GM12878 (cell line): ENCODE measurements at regions of chr7 and their contacts with region 1.

Region 1: GRCh38 chr7:137613006-137613405 is 233.8 kb downstream of the DGKI start:
- DNase-seq: no peak
- ATAC-seq: no peak
- H3K4me3 ChIP-seq: no peak overlapping the region
- H3K27ac ChIP-seq: no peak overlapping the region
- H3K4me1 ChIP-seq: no peaks in the 10 kb centered on the region
- H3K27me3 ChIP-seq: peaks cover 0 to 3% of the 10 kb centered on the region in 2 experiments; a peak in 2 of 4 replicates
- CTCF ChIP-seq: no peak
- EP300 ChIP-seq: no peak
- POLR2A ChIP-seq: no peak
- RAD21 ChIP-seq: no peak

Region 2: GRCh38 chr7:137626469-137627067 is 13.6 kb after region 1 on chr7:
- CTCF ChIA-PET with region 1: interaction called, 48 read pairs
- POLR2A ChIA-PET with region 1: no interaction called
- RAD21 ChIA-PET with region 1: interaction called, 3 read pairs
- SMC1A ChIA-PET with region 1: interaction called, 7 read pairs
- in situ Hi-C with region 1: no loop called
- intact Hi-C with region 1: no loop called
- DNase-seq: peak; percentile 12
- ATAC-seq: peak; percentile 92
- H3K4me3 ChIP-seq: no peak overlapping the region
- H3K27ac ChIP-seq: no peak overlapping the region
- H3K4me1 ChIP-seq: no peaks in the 10 kb centered on the region
- H3K27me3 ChIP-seq: no peaks in the 10 kb centered on the region
- CTCF ChIP-seq: peak; percentile 65 to 77 (median 76)
- EP300 ChIP-seq: no peak
- POLR2A ChIP-seq: no peak
- RAD21 ChIP-seq: peak; percentile 64

Region 3: GRCh38 chr7:137642472-137642871 is 29.5 kb after region 1 on chr7:
- CTCF ChIA-PET with region 1: no interaction called
- POLR2A ChIA-PET with region 1: no interaction called
- RAD21 ChIA-PET with region 1: no interaction called
- SMC1A ChIA-PET with region 1: no interaction called
- in situ Hi-C with region 1: no loop called
- intact Hi-C with region 1: no loop called
- DNase-seq: no peak
- ATAC-seq: no peak
- H3K4me3 ChIP-seq: no peak overlapping the region
- H3K27ac ChIP-seq: no peak overlapping the region
- H3K4me1 ChIP-seq: no peaks in the 10 kb centered on the region
- H3K27me3 ChIP-seq: no peaks in the 10 kb centered on the region
- CTCF ChIP-seq: no peak
- EP300 ChIP-seq: no peak
- POLR2A ChIP-seq: no peak
- RAD21 ChIP-seq: no peak